ENCODE measurements at regions of chr2 and their contacts with region 1.

Region 1: DNA sequence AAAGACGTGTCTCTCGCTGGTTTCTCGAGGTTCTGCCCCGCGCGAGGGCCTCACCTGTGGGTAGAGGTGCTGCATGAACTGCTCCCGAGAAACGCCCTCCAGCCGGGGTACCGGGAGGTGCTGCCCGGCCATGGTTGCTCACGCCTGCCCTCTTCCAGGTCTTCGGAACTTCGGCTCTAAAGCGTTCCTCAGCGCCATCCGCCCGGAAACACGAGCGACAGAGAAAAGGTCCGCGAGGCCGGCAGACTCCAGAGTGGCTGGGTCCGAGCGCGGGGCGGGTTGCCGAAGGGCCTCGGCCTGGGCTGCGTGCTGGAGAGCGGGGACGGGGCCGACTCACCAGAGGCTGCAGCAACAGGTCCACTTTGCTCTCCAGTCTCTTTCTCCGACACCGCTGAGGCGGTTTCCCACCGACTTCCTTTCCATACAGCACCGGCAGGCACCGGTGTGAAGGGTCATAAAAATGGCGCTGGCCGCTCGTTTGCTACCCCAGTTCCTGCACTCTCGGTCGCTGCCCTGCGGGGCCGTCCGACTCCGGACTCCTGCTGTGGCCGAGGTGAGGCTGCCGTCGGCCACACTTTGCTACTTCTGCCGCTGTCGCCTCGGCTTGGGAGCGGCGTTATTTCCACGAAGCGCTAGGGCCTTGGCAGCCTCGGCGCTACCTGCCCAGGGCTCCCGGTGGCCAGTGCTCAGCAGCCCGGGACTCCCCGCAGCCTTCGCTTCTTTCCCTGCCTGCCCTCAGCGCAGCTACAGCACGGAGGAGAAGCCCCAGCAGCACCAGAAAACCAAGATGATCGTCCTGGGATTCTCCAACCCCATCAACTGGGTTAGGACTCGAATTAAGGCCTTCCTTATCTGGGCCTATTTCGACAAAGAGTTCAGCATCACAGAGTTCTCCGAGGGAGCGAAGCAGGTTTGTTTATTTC is at the starts of genes MAIP1 and TYW5:
- DNase-seq: peak; percentile 83
- ATAC-seq: peak; percentile 87
- H3K4me3 Mint-ChIP-seq: peak within 1 kb of the TSS; percentile 100
- H3K27ac Mint-ChIP-seq: peak within 1 kb of the TSS; percentile 93
- H3K4me1 Mint-ChIP-seq: peaks cover 47% of the 10 kb centered on the region
- H3K27me3 Mint-ChIP-seq: no peaks in the 10 kb centered on the region
- CTCF ChIP-seq: no peak
- total RNA-seq, gene MAIP1: 31.9 to 32.3 TPM
- total RNA-seq, gene TYW5: 8.3 to 8.4 TPM

Region 2: DNA sequence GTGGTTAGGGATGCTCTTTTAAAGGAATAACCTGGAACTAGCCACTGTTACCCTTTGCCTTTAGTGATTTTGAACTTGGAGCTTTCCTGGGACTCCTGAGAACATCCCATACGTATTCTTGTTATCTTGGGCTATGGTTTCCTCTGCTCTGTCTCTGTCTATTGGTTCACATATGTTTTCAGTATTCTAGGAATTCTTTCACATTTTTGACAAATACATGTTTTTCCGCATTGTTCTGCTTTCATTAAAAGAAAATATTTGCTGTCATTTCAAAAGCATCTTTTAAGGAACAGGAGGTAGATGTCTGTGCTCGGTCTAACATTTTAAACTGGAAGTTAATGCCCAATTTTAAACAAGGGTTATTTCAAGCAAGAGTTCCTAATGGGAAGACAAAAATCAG is 319.6 kb before region 1 on chr2:
- CTCF ChIA-PET with region 1: no interaction called
- POLR2A ChIA-PET with region 1: no interaction called
- intact Hi-C with region 1: no loop called
- DNase-seq: no peak
- ATAC-seq: no peak
- H3K4me3 Mint-ChIP-seq: no peak overlapping the region
- H3K27ac Mint-ChIP-seq: no peak overlapping the region
- H3K4me1 Mint-ChIP-seq: no peaks in the 10 kb centered on the region
- H3K27me3 Mint-ChIP-seq: peaks cover 1% of the 10 kb centered on the region
- CTCF ChIP-seq: no peak

Region 3: GRCh38 chr2:199911052-199911876 is 44.3 kb before region 1 on chr2 and contains the start of gene C2orf69:
- CTCF ChIA-PET with region 1: no interaction called
- POLR2A ChIA-PET with region 1: no interaction called
- intact Hi-C with region 1: loop called (anchors 5 kb)
- DNase-seq: peak; percentile 94
- ATAC-seq: peak; percentile 91
- H3K4me3 Mint-ChIP-seq: peak within 1 kb of the TSS; percentile 94
- H3K27ac Mint-ChIP-seq: peak within 1 kb of the TSS; percentile 91
- H3K4me1 Mint-ChIP-seq: peaks cover 21% of the 10 kb centered on the region
- H3K27me3 Mint-ChIP-seq: peaks cover 6% of the 10 kb centered on the region
- CTCF ChIP-seq: no peak
- total RNA-seq, gene C2orf69: 15.9 to 17.0 TPM

Region 4: DNA sequence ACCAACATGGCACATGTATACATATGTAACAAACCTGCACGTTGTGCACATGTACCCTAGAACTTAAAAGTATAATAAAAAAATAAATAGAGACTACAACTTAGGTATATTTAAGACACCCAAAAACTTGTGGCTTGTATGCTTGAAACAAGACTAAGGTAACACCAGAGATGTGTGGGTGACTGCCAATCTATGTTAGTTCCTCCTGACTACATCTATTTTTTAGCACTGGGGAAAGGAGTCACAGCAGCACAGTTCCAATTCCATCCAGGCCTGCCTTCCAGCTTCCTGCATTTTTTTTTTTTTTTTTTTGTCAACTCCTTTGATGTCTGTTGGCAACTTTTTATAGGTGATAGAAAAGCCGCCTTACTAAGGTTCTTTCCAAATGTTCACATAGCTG is 26.3 kb before region 1 on chr2:
- CTCF ChIA-PET with region 1: no interaction called
- POLR2A ChIA-PET with region 1: no interaction called
- intact Hi-C with region 1: loop called (anchors 2 kb)
- DNase-seq: no peak
- ATAC-seq: no peak
- H3K4me3 Mint-ChIP-seq: no peak overlapping the region
- H3K27ac Mint-ChIP-seq: peak overlapping the region; percentile 57
- H3K4me1 Mint-ChIP-seq: peaks cover 2% of the 10 kb centered on the region
- H3K27me3 Mint-ChIP-seq: no peaks in the 10 kb centered on the region
- CTCF ChIP-seq: no peak

Measured in activated CD8-positive, alpha-beta T cell treated with anti-CD3 and anti-CD28 coated beads for 36 hours (primary cell).